ENCODE measurements at regions of chr17 and their contacts with region 1.

Region 1: GRCh38 chr17:76458580-76459490 is 5.9 kb upstream of the UBE2O start:
- DNase-seq: peak in 1 of 2 experiments; percentile 60
- H3K4me3 ChIP-seq: no peak overlapping the region
- H3K27ac ChIP-seq: no peak overlapping the region
- H3K4me1 ChIP-seq: no peaks in the 10 kb centered on the region
- H3K27me3 ChIP-seq: no peaks in the 10 kb centered on the region
- CTCF ChIP-seq: peak; percentile 60

Region 2: DNA sequence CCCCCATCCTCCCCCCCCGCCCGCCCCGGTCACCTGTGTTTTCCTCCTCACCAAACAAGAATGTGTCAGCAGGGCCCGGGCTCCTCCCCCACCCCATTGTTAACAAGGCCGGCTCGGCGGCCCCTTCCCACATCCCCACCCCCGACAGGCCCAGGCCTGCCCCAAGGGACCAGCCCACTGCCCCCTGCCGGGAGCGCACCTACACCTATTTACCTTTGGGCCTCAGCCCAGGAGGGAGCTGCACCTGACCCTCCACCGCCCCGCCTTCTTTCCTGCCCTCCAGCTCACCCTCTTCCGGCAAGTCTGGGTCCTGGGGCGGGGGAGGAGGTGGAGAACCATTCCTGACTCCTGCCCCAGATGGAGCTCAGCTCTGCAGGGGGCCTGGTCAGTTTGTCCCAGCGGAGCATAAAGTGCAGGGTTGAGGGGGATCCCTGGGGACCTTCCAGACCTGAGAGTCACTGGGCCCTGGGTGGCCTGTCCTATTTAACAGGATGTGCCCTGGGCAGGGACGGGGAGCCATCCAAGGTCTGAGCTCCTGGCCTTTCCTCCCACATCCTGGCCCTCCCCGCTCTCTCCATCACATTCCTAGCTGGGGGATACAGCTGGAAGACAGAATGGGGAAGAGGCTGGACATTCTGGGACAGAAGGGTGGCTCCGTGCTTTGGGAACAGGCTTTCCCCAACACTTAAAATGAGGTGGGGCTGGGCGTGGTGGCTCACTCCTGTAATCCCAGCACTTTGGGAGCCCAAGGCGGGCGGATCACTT is 326.1 kb before region 1 on chr17:
- CTCF ChIA-PET with region 1: no interaction called
- POLR2A ChIA-PET with region 1: interaction called, 15 read pairs
- intact Hi-C with region 1: no loop called
- DNase-seq: peak; percentile 77 to 98
- H3K4me3 ChIP-seq: no peak overlapping the region
- H3K27ac ChIP-seq: peak overlapping the region; percentile 26; the same call in 1 of the 2 replicates
- H3K4me1 ChIP-seq: peaks cover 28% of the 10 kb centered on the region
- H3K27me3 ChIP-seq: no peaks in the 10 kb centered on the region
- CTCF ChIP-seq: no peak

Region 3: GRCh38 chr17:76327696-76328095 is 131.1 kb before region 1 on chr17:
- CTCF ChIA-PET with region 1: interaction called, 10 read pairs
- POLR2A ChIA-PET with region 1: no interaction called
- intact Hi-C with region 1: no loop called
- DNase-seq: no peak
- H3K4me3 ChIP-seq: no peak overlapping the region
- H3K27ac ChIP-seq: no peak overlapping the region
- H3K4me1 ChIP-seq: peaks cover 21% of the 10 kb centered on the region
- H3K27me3 ChIP-seq: no peaks in the 10 kb centered on the region
- CTCF ChIP-seq: no peak

Region 4: DNA sequence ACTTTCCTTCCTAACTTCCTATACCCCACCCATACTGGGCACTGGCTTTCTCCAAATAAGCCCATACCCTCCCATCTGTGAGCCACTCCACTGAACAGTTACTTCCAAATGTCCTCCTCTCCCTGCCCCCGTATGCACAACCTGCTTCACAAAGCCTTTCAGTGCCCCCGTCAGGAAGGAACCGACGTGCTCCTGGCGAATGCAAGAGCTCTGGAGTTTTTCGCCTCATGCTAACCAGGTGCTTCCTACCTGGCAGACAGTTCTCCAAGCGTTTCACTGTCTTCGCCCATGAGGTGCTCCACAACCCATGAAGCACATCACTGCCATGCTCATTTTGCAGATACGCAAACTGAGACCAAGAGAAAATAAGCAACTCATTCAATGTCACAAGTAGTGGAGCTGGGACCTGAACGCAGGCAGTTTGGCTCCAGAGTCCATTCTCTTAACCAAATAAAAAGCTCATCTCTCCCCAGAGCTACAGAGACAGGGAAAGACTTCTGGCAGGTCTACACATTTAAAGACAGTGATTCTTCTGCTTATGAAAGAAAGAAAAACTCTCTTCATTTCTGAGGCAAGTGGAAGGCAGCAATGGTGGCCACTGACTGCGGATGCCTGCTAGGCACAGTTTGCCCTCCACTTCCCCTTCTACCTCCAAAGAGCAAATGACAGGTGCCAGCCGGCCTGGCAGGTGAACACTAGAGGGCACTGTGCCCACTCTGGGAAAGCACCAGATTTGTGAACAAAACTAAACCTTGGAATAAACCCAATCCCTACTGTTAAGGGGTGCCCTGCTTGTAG is 50.6 kb before region 1 on chr17:
- CTCF ChIA-PET with region 1: interaction called, 15 read pairs
- POLR2A ChIA-PET with region 1: no interaction called
- intact Hi-C with region 1: loop called (anchors 1 kb)
- DNase-seq: peak in 1 of 2 experiments; percentile 67
- H3K4me3 ChIP-seq: no peak overlapping the region
- H3K27ac ChIP-seq: no peak overlapping the region
- H3K4me1 ChIP-seq: no peaks in the 10 kb centered on the region
- H3K27me3 ChIP-seq: no peaks in the 10 kb centered on the region
- CTCF ChIP-seq: peak; percentile 79

Region 5: GRCh38 chr17:76444518-76445311 is 14.1 kb before region 1 on chr17:
- CTCF ChIA-PET with region 1: interaction called, 15 read pairs
- POLR2A ChIA-PET with region 1: no interaction called
- intact Hi-C with region 1: no loop called
- DNase-seq: no peak
- H3K4me3 ChIP-seq: no peak overlapping the region
- H3K27ac ChIP-seq: peak overlapping the region; percentile 98
- H3K4me1 ChIP-seq: peaks cover 44% of the 10 kb centered on the region
- H3K27me3 ChIP-seq: no peaks in the 10 kb centered on the region
- CTCF ChIP-seq: no peak

Region 6: GRCh38 chr17:76506408-76507349 is 47.8 kb after region 1 on chr17:
- CTCF ChIA-PET with region 1: interaction called, 4 read pairs
- POLR2A ChIA-PET with region 1: no interaction called
- intact Hi-C with region 1: loop called (anchors 1 kb)
- DNase-seq: peak; percentile 43 to 87
- H3K4me3 ChIP-seq: no peak overlapping the region
- H3K27ac ChIP-seq: no peak overlapping the region
- H3K4me1 ChIP-seq: no peaks in the 10 kb centered on the region
- H3K27me3 ChIP-seq: no peaks in the 10 kb centered on the region
- CTCF ChIP-seq: peak; percentile 86

Region 7: GRCh38 chr17:76631829-76632565 is 173.2 kb after region 1 on chr17:
- CTCF ChIA-PET with region 1: no interaction called
- POLR2A ChIA-PET with region 1: no interaction called
- intact Hi-C with region 1: no loop called
- DNase-seq: peak; percentile 52 to 60
- H3K4me3 ChIP-seq: no peak overlapping the region
- H3K27ac ChIP-seq: no peak overlapping the region
- H3K4me1 ChIP-seq: no peaks in the 10 kb centered on the region
- H3K27me3 ChIP-seq: no peaks in the 10 kb centered on the region
- CTCF ChIP-seq: no peak